Activated T-helper 1 cell treated with anti-CD3 and anti-CD28 coated beads, Interleukin-12 subunit alpha, Interleukin-12 subunit beta, Interleukin-2, Interleukin-4 antibody, amounts not matched to agents 30 ng/mL and 10 ng/mL and 1 ng/mL, durations not matched to agents 14 hours and 24 hours and 36 hours (primary cell): ENCODE measurements at regions of chr7 and their contacts with region 1.

Region 1: DNA sequence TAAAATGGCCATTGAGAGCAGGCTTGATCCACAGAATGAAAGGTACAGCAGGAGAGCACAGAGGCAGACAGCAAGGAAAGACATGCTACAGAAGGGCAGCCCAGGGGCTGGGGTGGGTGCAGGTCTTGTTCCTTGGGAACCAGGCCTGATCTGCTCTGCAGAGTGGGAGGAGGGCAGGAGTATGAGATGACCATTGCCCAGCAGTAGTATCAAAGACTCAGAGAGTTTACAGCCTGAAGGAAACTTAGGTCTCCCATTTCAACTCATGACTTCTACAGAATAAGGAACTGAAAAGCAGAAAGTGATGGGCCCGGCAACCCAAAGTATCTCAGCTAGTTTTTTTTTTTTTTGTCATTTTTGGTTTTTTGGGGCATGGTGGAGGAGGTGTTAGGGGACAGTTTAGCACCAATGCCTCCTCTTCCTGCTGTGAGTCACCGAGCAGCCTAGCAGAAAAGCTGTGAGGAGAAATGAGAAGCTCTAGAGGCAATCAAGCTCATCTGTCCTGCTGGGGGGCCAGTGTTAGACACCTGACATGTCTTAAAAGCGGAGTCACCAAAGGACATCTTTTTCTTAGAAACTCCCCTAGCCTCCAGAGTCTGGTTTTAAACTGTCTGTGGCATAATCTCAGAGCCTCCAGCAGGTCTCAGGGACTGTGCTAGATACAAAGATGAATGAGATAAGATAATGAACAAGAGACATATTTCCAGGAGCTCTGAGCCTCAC is 34.3 kb upstream of the HERPUD2 start:
- DNase-seq: peak; percentile 19
- H3K4me3 Mint-ChIP-seq: peak overlapping the region; percentile 26
- H3K27ac Mint-ChIP-seq: peak overlapping the region; percentile 55
- H3K4me1 Mint-ChIP-seq: peaks cover 69% of the 10 kb centered on the region
- H3K27me3 Mint-ChIP-seq: peaks cover 6% of the 10 kb centered on the region

Region 2: DNA sequence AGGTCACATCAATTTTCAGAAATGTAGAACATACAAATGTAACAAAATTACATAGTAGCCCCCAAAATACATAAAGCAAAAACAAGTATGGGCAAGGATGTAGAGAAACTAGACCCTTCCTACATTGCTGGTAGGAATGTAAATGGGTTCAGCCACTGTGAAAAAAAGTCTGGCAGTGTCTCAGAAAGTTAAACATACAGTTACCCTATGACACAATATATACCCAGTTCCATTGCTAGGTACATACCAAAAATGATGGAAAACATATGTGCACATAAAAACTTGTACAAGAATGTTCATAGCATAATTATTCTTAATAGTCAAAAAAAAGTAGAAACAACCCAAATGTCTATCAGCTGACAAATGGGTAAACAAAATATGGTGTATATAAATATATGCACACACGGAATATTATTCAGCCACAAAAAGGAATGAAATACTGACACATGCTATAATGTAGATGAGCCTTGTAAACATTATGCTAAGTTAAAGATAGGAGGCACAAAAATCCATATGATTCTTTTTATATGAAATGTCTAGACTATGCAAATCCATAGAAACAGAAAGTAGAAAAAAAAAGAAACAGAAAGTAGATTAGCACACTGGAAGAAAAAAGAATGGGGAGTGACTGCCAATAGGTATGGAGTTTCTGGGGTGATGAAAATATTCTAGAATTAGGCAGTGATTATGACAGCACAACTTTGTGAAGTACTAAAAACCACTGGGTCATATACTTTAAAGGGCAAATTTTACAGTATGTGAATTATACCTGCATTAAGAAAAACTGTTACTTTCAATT is 47.8 kb before region 1 on chr7:
- intact Hi-C with region 1: loop called (anchors 2 kb)
- DNase-seq: no peak
- H3K4me3 Mint-ChIP-seq: peak overlapping the region; percentile 10
- H3K27ac Mint-ChIP-seq: peak overlapping the region; percentile 31
- H3K4me1 Mint-ChIP-seq: peaks cover 57% of the 10 kb centered on the region
- H3K27me3 Mint-ChIP-seq: no peaks in the 10 kb centered on the region

Region 3: DNA sequence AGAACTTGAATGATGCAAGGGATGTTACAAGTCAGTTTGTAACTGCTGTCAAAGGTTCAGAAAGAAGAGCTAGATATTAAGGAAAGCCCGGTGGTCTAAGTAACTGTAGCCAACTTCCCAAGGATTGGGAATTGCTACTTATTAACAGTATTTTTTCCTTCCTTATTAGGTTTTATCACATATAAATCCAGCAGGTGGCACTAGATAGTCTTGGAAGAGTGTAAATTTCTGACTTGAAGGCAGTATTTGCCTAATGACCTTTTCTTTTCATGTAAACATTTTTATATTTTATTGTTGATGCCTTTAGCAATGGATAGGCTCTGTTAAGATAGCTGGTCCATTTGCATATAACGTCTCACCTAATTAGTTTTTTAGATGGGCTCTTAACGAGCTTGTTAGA is 711.7 kb after region 1 on chr7:
- intact Hi-C with region 1: no loop called
- DNase-seq: no peak
- H3K4me3 Mint-ChIP-seq: no peak overlapping the region
- H3K27ac Mint-ChIP-seq: no peak overlapping the region
- H3K4me1 Mint-ChIP-seq: no peaks in the 10 kb centered on the region
- H3K27me3 Mint-ChIP-seq: no peaks in the 10 kb centered on the region